H1 (cell line): ENCODE measurements at regions of chr19 and their contacts with region 1.

Region 1: GRCh38 chr19:19475849-19476828 is 39.2 kb downstream of the TSSK6 start:
- DNase-seq: no peak
- H3K4me3 ChIP-seq: peak overlapping the region in 1 of 4 experiments; percentile 42; a peak in 3 of 8 replicates
- H3K27ac ChIP-seq: no peak overlapping the region
- H3K4me1 ChIP-seq: peaks cover 12 to 21% (median 17%) of the 10 kb centered on the region in 4 experiments
- H3K27me3 ChIP-seq: no peaks in the 10 kb centered on the region
- CTCF ChIP-seq: peak; percentile 59 to 70 (median 60)
- EP300 ChIP-seq: no peak
- POLR2A ChIP-seq: no peak
- RAD21 ChIP-seq: peak; percentile 68 to 77

Region 2: GRCh38 chr19:19399733-19400433 is 76.3 kb before region 1 on chr19:
- CTCF ChIA-PET with region 1: interaction called, 13 read pairs
- POLR2A ChIA-PET with region 1: interaction called, 3 read pairs
- DNase-seq: no peak
- H3K4me3 ChIP-seq: no peak overlapping the region
- H3K27ac ChIP-seq: no peak overlapping the region
- H3K4me1 ChIP-seq: peaks cover 0 to 2% (median 0%) of the 10 kb centered on the region in 4 experiments; a peak in 3 of 7 replicates
- H3K27me3 ChIP-seq: no peaks in the 10 kb centered on the region
- CTCF ChIP-seq: no peak
- EP300 ChIP-seq: no peak
- POLR2A ChIP-seq: no peak
- RAD21 ChIP-seq: no peak

Region 3: GRCh38 chr19:19410275-19411192 is 65.6 kb before region 1 on chr19:
- CTCF ChIA-PET with region 1: interaction called, 11 read pairs
- POLR2A ChIA-PET with region 1: interaction called, 9 read pairs
- DNase-seq: no peak
- H3K4me3 ChIP-seq: no peak overlapping the region
- H3K27ac ChIP-seq: no peak overlapping the region
- H3K4me1 ChIP-seq: peaks cover 10 to 27% (median 20%) of the 10 kb centered on the region in 4 experiments; a peak in 6 of 7 replicates
- H3K27me3 ChIP-seq: no peaks in the 10 kb centered on the region
- CTCF ChIP-seq: peak; percentile 2 to 35 (median 26); a peak in 2 of 4 replicates
- EP300 ChIP-seq: no peak
- POLR2A ChIP-seq: no peak
- RAD21 ChIP-seq: no peak; a peak in 1 of 4 replicates

Region 4: GRCh38 chr19:19418555-19419260 is 57.4 kb before region 1 on chr19:
- CTCF ChIA-PET with region 1: interaction called, 13 read pairs
- POLR2A ChIA-PET with region 1: no interaction called
- DNase-seq: no peak
- H3K4me3 ChIP-seq: no peak overlapping the region
- H3K27ac ChIP-seq: no peak overlapping the region
- H3K4me1 ChIP-seq: peaks cover 0 to 3% (median under 1%) of the 10 kb centered on the region in 4 experiments; a peak in 3 of 7 replicates
- H3K27me3 ChIP-seq: no peaks in the 10 kb centered on the region
- CTCF ChIP-seq: no peak
- EP300 ChIP-seq: no peak
- POLR2A ChIP-seq: no peak
- RAD21 ChIP-seq: no peak

Region 5: DNA sequence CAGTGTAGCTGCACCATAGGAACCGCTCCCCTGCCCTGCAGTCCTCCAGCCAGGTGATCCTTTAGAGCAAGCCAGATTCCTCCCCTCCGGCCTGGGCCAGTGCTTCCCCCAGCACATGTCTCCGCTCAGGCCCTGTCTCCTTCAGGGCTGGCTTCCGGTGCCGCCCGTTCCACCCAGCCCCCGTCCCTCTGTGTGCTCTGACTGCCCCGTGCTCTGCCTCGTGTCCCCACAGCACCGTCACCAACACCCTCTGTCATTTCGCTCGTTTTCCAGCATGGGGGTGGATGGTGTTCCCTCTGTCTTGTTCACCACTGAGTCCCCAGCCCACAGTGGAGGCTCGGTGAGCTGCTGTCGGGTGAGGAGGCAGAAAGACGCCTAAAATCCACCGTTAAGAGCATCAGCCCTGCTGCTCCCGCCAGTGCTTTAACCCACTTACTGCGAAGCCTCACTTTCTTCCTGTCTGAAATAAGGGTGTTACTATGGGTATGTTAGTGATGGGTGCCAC is 15.3 kb before region 1 on chr19:
- CTCF ChIA-PET with region 1: interaction called, 12 read pairs
- POLR2A ChIA-PET with region 1: interaction called, 16 read pairs
- DNase-seq: no peak
- H3K4me3 ChIP-seq: no peak overlapping the region
- H3K27ac ChIP-seq: no peak overlapping the region; the same call in 1 of the 2 replicates
- H3K4me1 ChIP-seq: peaks cover 38 to 58% (median 50%) of the 10 kb centered on the region in 4 experiments
- H3K27me3 ChIP-seq: no peaks in the 10 kb centered on the region; a peak in 1 of 7 replicates
- CTCF ChIP-seq: no peak
- EP300 ChIP-seq: no peak
- POLR2A ChIP-seq: no peak
- RAD21 ChIP-seq: no peak